Activated naive CD4-positive, alpha-beta T cell treated with anti-CD3 and anti-CD28 coated beads for 36 hours (primary cell): ENCODE measurements at regions of chr14 and their contacts with region 1.

Region 1: GRCh38 chr14:20343092-20343861 is at the start of gene PARP2:
- DNase-seq: peak; percentile 96
- H3K4me3 Mint-ChIP-seq: peak within 1 kb of the TSS; percentile 96
- H3K27ac Mint-ChIP-seq: peak within 1 kb of the TSS; percentile 95
- H3K4me1 Mint-ChIP-seq: peaks cover 19% of the 10 kb centered on the region
- H3K27me3 Mint-ChIP-seq: peaks cover 2% of the 10 kb centered on the region
- total RNA-seq, gene PARP2: 62.5 to 63.5 TPM

Region 2: GRCh38 chr14:20305265-20306078 is 37.8 kb before region 1 on chr14 and contains the start of gene TTC5:
- CTCF ChIA-PET with region 1: interaction called, 5 read pairs
- intact Hi-C with region 1: loop called (anchors 1 kb)
- DNase-seq: peak; percentile 92
- H3K4me3 Mint-ChIP-seq: peak within 1 kb of the TSS; percentile 96
- H3K27ac Mint-ChIP-seq: peak within 1 kb of the TSS; percentile 82
- H3K4me1 Mint-ChIP-seq: peaks cover 21% of the 10 kb centered on the region
- H3K27me3 Mint-ChIP-seq: no peaks in the 10 kb centered on the region
- total RNA-seq, gene TTC5: 15.2 to 18.5 TPM

Region 3: GRCh38 chr14:20332788-20333493 is 10.3 kb before region 1 on chr14 and contains the start of gene CCNB1IP1:
- CTCF ChIA-PET with region 1: interaction called, 83 read pairs
- intact Hi-C with region 1: loop called (anchors 1 kb)
- DNase-seq: peak; percentile 71
- H3K4me3 Mint-ChIP-seq: peak within 1 kb of the TSS; percentile 90
- H3K27ac Mint-ChIP-seq: peak within 1 kb of the TSS; percentile 92
- H3K4me1 Mint-ChIP-seq: peaks cover 38% of the 10 kb centered on the region
- H3K27me3 Mint-ChIP-seq: no peaks in the 10 kb centered on the region
- total RNA-seq, gene CCNB1IP1: 93.4 to 98.6 TPM

Region 4: DNA sequence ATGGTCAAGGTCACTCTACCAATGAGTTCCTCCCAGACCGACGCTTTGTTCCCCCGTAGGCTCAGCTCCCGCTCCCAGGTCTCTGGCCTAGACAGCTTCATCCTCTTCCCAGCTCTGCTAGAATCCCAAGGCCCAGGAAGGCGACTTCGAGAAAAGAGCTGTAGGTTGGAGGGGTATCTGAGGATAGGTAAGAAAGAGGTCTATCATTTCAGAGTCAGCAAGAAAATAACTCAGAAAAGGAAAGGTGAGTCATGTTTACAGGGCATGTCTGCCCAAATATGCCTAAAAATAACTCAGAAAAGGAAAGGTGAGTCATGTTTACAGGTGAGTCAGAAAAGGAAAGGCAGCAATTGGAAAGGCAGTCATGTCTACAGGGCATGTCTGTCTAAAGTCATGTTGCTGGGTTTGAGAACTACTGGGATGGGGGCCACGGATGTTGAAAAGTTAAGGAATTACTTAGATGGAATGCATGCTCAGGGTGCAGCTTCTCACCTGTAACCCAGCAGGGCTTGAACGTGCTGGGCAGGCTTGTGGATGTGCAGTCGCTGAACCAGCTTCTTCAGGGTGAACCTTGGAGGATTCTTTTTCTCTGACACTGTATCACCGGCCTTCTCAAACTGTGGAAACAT is 57.8 kb after region 1 on chr14:
- CTCF ChIA-PET with region 1: no interaction called
- intact Hi-C with region 1: loop called (anchors 1 kb)
- DNase-seq: peak; percentile 43
- H3K4me3 Mint-ChIP-seq: peak overlapping the region; percentile 56
- H3K27ac Mint-ChIP-seq: peak overlapping the region; percentile 98
- H3K4me1 Mint-ChIP-seq: peaks cover 28% of the 10 kb centered on the region
- H3K27me3 Mint-ChIP-seq: no peaks in the 10 kb centered on the region

Region 5: GRCh38 chr14:20461274-20462001 is 118.2 kb after region 1 on chr14 and contains the start of gene PIP4P1:
- CTCF ChIA-PET with region 1: interaction called, 4 read pairs
- intact Hi-C with region 1: loop called (anchors 1 kb)
- DNase-seq: peak; percentile 99
- H3K4me3 Mint-ChIP-seq: peak within 1 kb of the TSS; percentile 92
- H3K27ac Mint-ChIP-seq: peak within 1 kb of the TSS; percentile 96
- H3K4me1 Mint-ChIP-seq: peaks cover 29% of the 10 kb centered on the region
- H3K27me3 Mint-ChIP-seq: no peaks in the 10 kb centered on the region
- total RNA-seq, gene PIP4P1: 31.6 to 32.3 TPM